ENCODE measurements at regions of chr12 and their contacts with region 1.

Region 1: GRCh38 chr12:67355578-67356379 is 86.6 kb downstream of the CAND1 start:
- DNase-seq: peak in 5 of 14 experiments; percentile 4 to 78 (median 63)
- ATAC-seq: peak; percentile 66
- H3K4me3 ChIP-seq: no peak overlapping the region
- H3K4me3 Mint-ChIP-seq: peak overlapping the region; percentile 11
- H3K27ac ChIP-seq: no peak overlapping the region
- H3K27ac Mint-ChIP-seq: no peak overlapping the region
- H3K4me1 ChIP-seq: peaks cover 4% of the 10 kb centered on the region
- H3K4me1 Mint-ChIP-seq: peaks cover 13% of the 10 kb centered on the region
- H3K27me3 ChIP-seq: no peaks in the 10 kb centered on the region
- H3K27me3 Mint-ChIP-seq: no peaks in the 10 kb centered on the region
- CTCF ChIP-seq: peak; percentile 87

Region 2: DNA sequence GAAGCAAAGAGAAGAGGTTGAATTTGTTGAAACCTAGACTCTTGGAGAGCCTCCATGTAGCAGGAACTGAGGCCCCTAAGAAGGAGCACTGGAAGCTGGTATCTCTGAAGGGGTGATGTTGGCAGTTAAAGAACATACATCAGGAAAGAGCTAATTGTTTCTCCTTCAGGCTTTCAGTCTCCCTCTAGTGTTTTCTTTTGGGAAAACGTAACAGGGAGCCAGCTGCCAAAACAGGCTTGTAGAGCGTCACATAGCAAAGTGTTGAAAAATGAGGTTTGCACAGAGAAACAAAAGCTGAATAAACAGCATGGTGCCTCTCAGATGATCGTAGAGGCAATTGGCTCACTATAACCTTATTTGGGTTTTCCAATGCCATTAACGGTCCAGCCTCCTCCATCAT is 133.5 kb before region 1 on chr12:
- CTCF ChIA-PET with region 1: no interaction called
- POLR2A ChIA-PET with region 1: no interaction called
- intact Hi-C with region 1: no loop called
- DNase-seq: no peak
- ATAC-seq: no peak
- H3K4me3 ChIP-seq: no peak overlapping the region
- H3K4me3 Mint-ChIP-seq: no peak overlapping the region
- H3K27ac ChIP-seq: no peak overlapping the region
- H3K27ac Mint-ChIP-seq: no peak overlapping the region
- H3K4me1 ChIP-seq: no peaks in the 10 kb centered on the region
- H3K4me1 Mint-ChIP-seq: no peaks in the 10 kb centered on the region
- H3K27me3 ChIP-seq: no peaks in the 10 kb centered on the region
- H3K27me3 Mint-ChIP-seq: no peaks in the 10 kb centered on the region
- CTCF ChIP-seq: no peak

Region 3: GRCh38 chr12:67441736-67442346 is 86.1 kb after region 1 on chr12:
- CTCF ChIA-PET with region 1: no interaction called
- POLR2A ChIA-PET with region 1: no interaction called
- intact Hi-C with region 1: loop called (anchors 5 kb)
- DNase-seq: peak; percentile 64 to 87 (median 74)
- ATAC-seq: peak; percentile 96
- H3K4me3 ChIP-seq: no peak overlapping the region
- H3K4me3 Mint-ChIP-seq: peak overlapping the region; percentile 77
- H3K27ac ChIP-seq: no peak overlapping the region
- H3K27ac Mint-ChIP-seq: peak overlapping the region; percentile 10
- H3K4me1 ChIP-seq: peaks cover 14% of the 10 kb centered on the region
- H3K4me1 Mint-ChIP-seq: peaks cover 32% of the 10 kb centered on the region
- H3K27me3 ChIP-seq: no peaks in the 10 kb centered on the region
- H3K27me3 Mint-ChIP-seq: no peaks in the 10 kb centered on the region
- CTCF ChIP-seq: peak; percentile 84

Region 4: GRCh38 chr12:67667276-67668073 is 311.7 kb after region 1 on chr12:
- CTCF ChIA-PET with region 1: interaction called, 9 read pairs
- POLR2A ChIA-PET with region 1: interaction called, 3 read pairs
- intact Hi-C with region 1: loop called (anchors 2 to 5 kb)
- DNase-seq: no peak
- ATAC-seq: no peak
- H3K4me3 ChIP-seq: no peak overlapping the region
- H3K4me3 Mint-ChIP-seq: no peak overlapping the region
- H3K27ac ChIP-seq: no peak overlapping the region
- H3K27ac Mint-ChIP-seq: peak overlapping the region; percentile 81
- H3K4me1 ChIP-seq: peaks cover 12% of the 10 kb centered on the region
- H3K4me1 Mint-ChIP-seq: peaks cover 70% of the 10 kb centered on the region
- H3K27me3 ChIP-seq: no peaks in the 10 kb centered on the region
- H3K27me3 Mint-ChIP-seq: no peaks in the 10 kb centered on the region
- CTCF ChIP-seq: no peak

Region 5: GRCh38 chr12:68040450-68041075 is 684.8 kb after region 1 on chr12:
- CTCF ChIA-PET with region 1: no interaction called
- POLR2A ChIA-PET with region 1: no interaction called
- intact Hi-C with region 1: loop called (anchors 2 to 5 kb)
- DNase-seq: peak; percentile 35 to 84 (median 52)
- ATAC-seq: peak; percentile 90
- H3K4me3 ChIP-seq: no peak overlapping the region
- H3K4me3 Mint-ChIP-seq: no peak overlapping the region
- H3K27ac ChIP-seq: no peak overlapping the region
- H3K27ac Mint-ChIP-seq: no peak overlapping the region
- H3K4me1 ChIP-seq: peaks cover 4% of the 10 kb centered on the region
- H3K4me1 Mint-ChIP-seq: peaks cover 5% of the 10 kb centered on the region
- H3K27me3 ChIP-seq: no peaks in the 10 kb centered on the region
- H3K27me3 Mint-ChIP-seq: no peaks in the 10 kb centered on the region
- CTCF ChIP-seq: peak; percentile 97

Measured in CD4-positive, alpha-beta T cell (primary cell).